ENCODE measurements at regions of chr10 and their contacts with region 1.

Region 1: GRCh38 chr10:127906548-127907377 is at the start of gene PTPRE:
- DNase-seq: peak; percentile 92
- ATAC-seq: peak; percentile 96
- H3K4me3 ChIP-seq: peak within 1 kb of the TSS; percentile 66
- H3K27ac ChIP-seq: peak within 1 kb of the TSS; percentile 82
- H3K4me1 ChIP-seq: peaks cover 18% of the 10 kb centered on the region
- H3K27me3 ChIP-seq: no peaks in the 10 kb centered on the region
- CTCF ChIP-seq: peak; percentile 67
- total RNA-seq, gene PTPRE: 70.6 TPM

Region 2: GRCh38 chr10:127600479-127600878 is 306.3 kb before region 1 on chr10:
- intact Hi-C with region 1: no loop called
- DNase-seq: no peak
- ATAC-seq: no peak
- H3K4me3 ChIP-seq: no peak overlapping the region
- H3K27ac ChIP-seq: no peak overlapping the region
- H3K4me1 ChIP-seq: no peaks in the 10 kb centered on the region
- H3K27me3 ChIP-seq: no peaks in the 10 kb centered on the region
- CTCF ChIP-seq: no peak

Region 3: DNA sequence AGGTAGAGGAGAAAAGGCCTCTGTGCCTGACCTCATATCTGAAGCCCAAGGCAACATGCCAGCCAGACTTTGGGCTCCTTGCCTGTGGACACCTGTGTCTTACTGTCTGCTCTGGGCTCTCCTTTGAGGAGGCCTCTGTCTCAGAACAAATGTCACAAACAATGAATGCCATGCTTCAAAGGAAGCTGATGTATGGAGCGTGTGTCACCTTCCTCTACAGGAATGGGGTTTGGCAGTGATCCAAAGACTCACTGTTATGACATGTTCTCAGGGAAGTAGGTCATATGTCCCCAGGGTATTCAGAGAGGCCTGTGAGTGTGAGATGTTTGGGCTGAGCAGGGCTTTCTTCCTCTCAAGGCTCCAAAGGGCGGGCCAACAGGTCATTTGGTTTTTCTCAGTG is 38.6 kb after region 1 on chr10:
- intact Hi-C with region 1: no loop called
- DNase-seq: no peak
- ATAC-seq: peak; percentile 54
- H3K4me3 ChIP-seq: no peak overlapping the region
- H3K27ac ChIP-seq: no peak overlapping the region
- H3K4me1 ChIP-seq: peaks cover 17% of the 10 kb centered on the region
- H3K27me3 ChIP-seq: no peaks in the 10 kb centered on the region
- CTCF ChIP-seq: no peak

Region 4: DNA sequence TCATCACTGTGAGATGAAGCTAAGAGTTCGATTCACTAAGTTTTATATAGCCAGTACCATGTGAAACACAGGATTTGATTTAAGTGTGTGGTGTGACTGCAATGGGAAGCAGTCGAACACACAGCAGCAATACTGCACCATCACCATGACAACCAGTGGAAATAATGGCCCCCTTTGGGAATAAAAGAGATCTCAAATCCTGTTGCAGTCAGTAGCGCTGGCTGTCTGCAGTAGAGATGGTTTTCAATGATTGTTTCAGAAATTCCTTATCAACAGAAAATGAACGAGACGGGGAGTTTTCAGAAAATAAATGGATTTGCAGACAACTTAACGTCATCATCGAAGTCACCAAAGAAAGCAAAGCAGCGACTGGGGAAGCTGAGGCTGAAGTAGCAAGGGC is 91.2 kb after region 1 on chr10:
- intact Hi-C with region 1: loop called (anchors 5 kb)
- DNase-seq: no peak
- ATAC-seq: no peak
- H3K4me3 ChIP-seq: no peak overlapping the region
- H3K27ac ChIP-seq: peak overlapping the region; percentile 71
- H3K4me1 ChIP-seq: peaks cover 24% of the 10 kb centered on the region
- H3K27me3 ChIP-seq: no peaks in the 10 kb centered on the region
- CTCF ChIP-seq: no peak

Region 5: DNA sequence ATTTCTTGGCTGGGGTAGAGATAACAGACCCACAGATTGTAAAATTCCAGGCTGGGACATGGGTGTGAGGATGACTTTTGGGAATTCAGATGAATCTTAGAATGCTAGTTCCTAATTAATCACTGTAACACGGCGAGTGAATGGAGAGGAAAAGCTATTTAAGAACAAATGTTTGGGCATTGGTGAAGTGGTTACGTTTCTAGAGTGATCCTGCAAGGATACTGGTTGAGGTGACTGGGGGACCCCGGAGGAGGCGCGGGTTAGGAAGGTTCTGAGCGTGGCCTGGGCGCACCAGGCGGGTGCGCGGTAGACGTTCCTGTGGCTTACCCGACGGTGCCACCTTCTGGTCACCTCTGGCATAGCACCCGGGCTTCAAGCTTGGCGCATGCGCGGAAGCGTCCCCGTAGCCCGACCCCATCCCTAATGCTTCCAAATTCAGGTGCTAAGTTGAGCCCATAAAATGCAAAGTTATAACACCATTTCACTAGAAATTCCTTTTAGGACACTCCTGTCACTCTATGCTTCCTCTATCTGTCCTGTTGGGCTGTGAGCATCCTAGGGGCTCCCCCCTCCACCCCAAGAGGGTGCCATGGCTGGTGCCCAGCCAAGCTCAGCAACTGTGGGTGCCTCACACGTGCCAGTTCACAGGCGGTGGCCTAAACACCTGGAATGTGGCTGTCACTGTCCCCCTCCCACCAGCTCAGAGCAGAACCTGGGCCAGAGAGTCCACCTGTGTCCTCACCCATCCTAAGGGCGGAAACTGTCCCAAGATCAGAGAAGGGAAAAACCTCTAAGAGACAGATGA is 104.6 kb after region 1 on chr10:
- intact Hi-C with region 1: loop called (anchors 5 kb)
- DNase-seq: peak; percentile 92
- ATAC-seq: peak; percentile 93
- H3K4me3 ChIP-seq: peak overlapping the region; percentile 15
- H3K27ac ChIP-seq: no peak overlapping the region
- H3K4me1 ChIP-seq: peaks cover 28% of the 10 kb centered on the region
- H3K27me3 ChIP-seq: no peaks in the 10 kb centered on the region
- CTCF ChIP-seq: peak; percentile 99

Measured in upper lobe of right lung (tissue), 1 donor.